Ovary (tissue), 10 donors: ENCODE measurements at regions of chr15 and their contacts with region 1.

Region 1: DNA sequence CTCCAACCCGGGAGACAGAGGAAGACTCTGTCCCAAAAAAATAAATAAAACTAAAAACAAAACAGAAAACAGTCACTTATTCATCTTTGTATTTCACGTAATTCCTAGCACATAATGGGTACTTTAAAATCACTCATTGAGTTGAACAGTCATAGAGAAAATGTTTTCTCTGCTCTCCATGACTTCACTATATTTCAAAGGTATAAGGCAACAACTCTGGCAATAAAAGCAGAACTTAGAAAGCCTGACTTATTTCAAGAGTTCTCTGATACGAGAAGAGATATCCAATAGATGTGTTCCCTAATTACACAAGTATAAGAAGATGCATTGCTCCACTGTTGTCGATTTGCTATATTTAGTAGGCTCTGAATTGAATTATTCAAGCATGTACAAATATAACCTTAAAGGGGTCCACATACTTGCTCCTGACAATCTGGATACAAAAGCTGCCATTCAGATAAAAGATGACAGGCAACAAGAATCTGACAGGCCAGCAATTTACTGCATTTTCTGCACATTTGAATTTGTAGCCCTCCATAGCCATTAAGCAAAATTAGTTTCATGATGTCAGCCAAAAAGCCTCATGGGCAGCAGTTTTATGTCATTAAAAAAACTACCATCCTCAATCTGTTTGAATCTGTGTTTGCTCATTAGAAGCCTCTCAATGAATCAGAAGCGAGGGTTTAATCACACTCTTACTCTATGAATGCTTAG is 47.9 kb downstream of the PEAK1 start:
- DNase-seq: no peak
- H3K4me3 ChIP-seq: no peak overlapping the region
- H3K27ac ChIP-seq: no peak overlapping the region
- H3K4me1 ChIP-seq: no peaks in the 10 kb centered on the region
- H3K27me3 ChIP-seq: no peaks in the 10 kb centered on the region
- CTCF ChIP-seq: no peak
- EP300 ChIP-seq: no peak
- POLR2A ChIP-seq: no peak

Region 2: DNA sequence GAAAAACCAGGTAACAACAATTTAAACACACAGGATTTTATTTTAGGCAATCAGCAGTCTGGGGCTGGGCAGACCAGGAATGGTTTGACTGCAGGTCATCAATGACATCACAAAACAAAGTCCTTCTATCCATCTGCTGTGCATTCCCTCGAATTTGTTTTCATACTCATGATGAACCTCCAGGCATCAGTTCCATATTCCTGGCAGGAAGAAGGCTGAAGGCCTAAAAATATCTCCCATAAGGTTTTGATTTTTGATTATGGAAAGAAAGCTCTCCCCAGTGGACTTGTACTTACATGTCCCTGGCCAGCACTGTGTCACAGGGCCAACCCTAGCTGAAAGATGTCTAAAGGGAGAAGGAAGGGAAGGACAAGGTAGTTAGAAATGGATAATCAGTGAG is 59.5 kb before region 1 on chr15:
- intact Hi-C with region 1: loop called in 1 of 4 experiments (anchors 2 kb)
- DNase-seq: no peak
- H3K4me3 ChIP-seq: no peak overlapping the region
- H3K27ac ChIP-seq: no peak overlapping the region
- H3K4me1 ChIP-seq: peaks cover 3% of the 10 kb centered on the region
- H3K27me3 ChIP-seq: no peaks in the 10 kb centered on the region
- CTCF ChIP-seq: no peak
- EP300 ChIP-seq: no peak
- POLR2A ChIP-seq: no peak